BJ (cell line): ENCODE measurements at regions of chr9 and their contacts with region 1.

Region 1: DNA sequence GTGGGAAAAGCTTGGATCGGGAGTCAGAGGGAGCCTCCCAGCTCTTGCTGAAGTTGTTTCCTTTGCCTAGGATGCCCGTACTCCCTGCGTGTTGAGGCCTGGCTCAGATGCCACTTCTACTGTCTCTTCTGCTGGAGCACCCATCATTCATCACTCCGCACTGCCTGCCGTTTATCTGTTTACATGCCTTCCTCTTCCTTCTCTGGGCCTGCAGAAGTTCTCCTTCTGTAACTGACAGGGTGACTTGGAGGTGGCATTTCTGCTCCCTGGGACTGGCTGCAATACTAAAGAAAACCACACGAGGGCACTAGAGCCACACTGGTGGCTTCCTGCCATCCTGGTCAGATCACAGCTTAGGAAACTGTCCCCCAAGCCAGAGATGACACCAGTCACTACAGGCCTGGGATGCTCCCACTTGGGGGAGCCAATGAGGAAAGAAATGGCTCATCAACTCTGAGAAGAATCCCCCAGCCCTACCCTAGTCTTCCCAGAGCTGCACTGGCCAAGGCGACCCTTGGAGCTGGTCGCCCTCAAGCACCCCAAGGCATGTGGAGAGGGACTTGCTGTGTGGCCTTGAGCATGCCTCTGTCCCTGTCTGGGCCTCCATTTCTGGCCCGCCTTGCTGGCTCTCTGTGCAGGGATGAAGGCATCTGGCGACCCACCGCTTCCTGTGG is 9.7 kb upstream of the SLC25A51 start:
- DNase-seq: no peak
- H3K4me3 ChIP-seq: no peak overlapping the region
- H3K27me3 ChIP-seq: no peaks in the 10 kb centered on the region
- CTCF ChIP-seq: peak; percentile 97

Region 2: GRCh38 chr9:37656936-37657335 is 256.7 kb before region 1 on chr9:
- CTCF ChIA-PET with region 1: no interaction called
- POLR2A ChIA-PET with region 1: no interaction called
- DNase-seq: no peak
- H3K4me3 ChIP-seq: no peak overlapping the region
- H3K27me3 ChIP-seq: peaks cover 32% of the 10 kb centered on the region
- CTCF ChIP-seq: no peak

Region 3: DNA sequence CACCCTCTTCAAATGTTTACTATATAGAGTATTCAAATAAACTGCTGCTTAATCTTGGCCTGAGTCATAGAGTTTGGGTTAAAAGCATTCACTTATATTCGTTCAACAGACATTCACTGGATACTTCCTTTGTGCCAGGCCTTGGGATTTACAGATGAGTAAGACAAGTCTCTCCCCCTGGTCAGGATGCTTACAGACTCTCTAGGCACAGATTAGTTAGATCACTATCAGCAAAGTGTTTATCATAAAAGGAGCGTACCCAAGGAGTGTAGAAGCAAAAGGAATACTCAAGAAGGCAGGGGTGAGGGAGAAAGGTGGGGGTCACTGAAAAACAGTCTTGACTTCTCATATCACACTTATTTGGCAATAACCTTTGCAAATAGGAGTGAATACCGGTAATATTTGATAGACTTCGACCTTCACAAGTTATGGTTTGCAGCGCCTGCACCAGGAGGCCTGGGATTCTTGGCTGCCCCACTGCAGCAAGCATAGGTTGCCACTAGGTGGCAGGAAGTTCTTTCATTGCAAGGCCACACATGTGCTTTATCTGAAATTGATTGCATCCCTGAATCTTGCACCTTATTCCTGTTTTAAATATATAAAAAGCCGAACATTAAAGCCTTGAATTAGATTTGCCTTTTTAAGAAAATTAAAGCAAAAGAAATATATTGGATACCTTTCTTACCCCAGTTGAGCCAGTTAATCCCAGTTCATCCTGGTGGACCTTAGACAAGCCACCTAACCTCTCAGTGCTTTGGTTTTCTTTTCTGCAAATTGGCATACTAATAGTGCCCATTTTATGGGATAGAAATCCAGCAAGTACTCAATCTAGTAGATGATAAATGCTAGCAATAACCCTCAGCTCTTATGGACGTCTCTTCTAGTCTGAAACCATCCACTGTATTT is 166.5 kb before region 1 on chr9:
- CTCF ChIA-PET with region 1: no interaction called
- POLR2A ChIA-PET with region 1: no interaction called
- DNase-seq: peak; percentile 10
- H3K4me3 ChIP-seq: no peak overlapping the region
- H3K27me3 ChIP-seq: peaks cover 2% of the 10 kb centered on the region; the same call in 1 of the 2 replicates
- CTCF ChIP-seq: peak; percentile 97

Region 4: GRCh38 chr9:37800631-37801286 is 112.9 kb before region 1 on chr9 and contains the start of gene DCAF10:
- CTCF ChIA-PET with region 1: no interaction called
- POLR2A ChIA-PET with region 1: interaction called, 13 read pairs
- DNase-seq: no peak
- H3K4me3 ChIP-seq: peak within 1 kb of the TSS; percentile 55
- H3K27me3 ChIP-seq: no peaks in the 10 kb centered on the region
- CTCF ChIP-seq: no peak
- polyA plus RNA-seq, gene DCAF10: 22.0 and 25.2 TPM in 2 replicates

Region 5: DNA sequence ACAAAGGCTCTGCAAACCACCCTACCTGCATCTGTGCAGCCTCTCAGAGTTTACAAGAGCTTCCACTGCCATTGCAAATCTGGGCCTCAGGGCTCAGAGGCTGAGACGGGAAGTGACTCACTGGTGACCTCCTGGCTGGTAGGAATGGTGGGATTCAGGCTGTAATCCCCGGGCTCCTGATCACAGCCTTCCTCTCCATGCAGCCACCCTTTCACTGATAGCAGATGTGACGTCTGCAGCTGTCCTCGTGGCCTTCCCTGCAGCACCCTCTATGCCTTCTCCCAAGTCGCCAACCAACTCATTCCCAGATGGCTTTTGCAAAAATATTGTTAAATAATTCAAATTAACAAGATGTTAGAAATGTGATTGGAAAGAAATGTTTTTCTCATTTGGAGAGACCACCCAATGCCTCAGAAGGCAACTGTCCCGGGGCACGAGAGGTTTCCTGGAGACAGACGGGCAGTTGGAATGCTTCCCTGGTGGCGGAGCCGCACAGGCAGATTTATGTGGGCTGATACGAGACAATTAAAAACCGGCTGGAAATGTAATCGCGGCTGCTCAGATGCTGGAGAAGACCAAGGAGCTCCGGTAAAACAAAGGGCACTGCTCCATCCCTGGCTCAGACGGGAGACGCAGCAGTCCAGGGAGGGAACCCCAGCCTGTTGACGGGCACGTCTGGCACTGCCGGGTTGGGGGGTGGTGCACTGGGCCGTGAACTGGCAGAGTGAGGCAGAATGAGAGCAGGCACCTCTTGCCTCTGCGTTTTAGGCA is 24.7 kb after region 1 on chr9:
- CTCF ChIA-PET with region 1: interaction called, 14 read pairs
- POLR2A ChIA-PET with region 1: no interaction called
- DNase-seq: peak; percentile 47
- H3K4me3 ChIP-seq: no peak overlapping the region
- H3K27me3 ChIP-seq: no peaks in the 10 kb centered on the region
- CTCF ChIP-seq: no peak

Region 6: GRCh38 chr9:38017149-38017884 is 103.7 kb after region 1 on chr9:
- CTCF ChIA-PET with region 1: interaction called, 30 read pairs
- POLR2A ChIA-PET with region 1: no interaction called
- DNase-seq: no peak
- H3K4me3 ChIP-seq: no peak overlapping the region
- H3K27me3 ChIP-seq: no peaks in the 10 kb centered on the region
- CTCF ChIP-seq: peak; percentile 23; the same call in 1 of the 2 replicates

Region 7: DNA sequence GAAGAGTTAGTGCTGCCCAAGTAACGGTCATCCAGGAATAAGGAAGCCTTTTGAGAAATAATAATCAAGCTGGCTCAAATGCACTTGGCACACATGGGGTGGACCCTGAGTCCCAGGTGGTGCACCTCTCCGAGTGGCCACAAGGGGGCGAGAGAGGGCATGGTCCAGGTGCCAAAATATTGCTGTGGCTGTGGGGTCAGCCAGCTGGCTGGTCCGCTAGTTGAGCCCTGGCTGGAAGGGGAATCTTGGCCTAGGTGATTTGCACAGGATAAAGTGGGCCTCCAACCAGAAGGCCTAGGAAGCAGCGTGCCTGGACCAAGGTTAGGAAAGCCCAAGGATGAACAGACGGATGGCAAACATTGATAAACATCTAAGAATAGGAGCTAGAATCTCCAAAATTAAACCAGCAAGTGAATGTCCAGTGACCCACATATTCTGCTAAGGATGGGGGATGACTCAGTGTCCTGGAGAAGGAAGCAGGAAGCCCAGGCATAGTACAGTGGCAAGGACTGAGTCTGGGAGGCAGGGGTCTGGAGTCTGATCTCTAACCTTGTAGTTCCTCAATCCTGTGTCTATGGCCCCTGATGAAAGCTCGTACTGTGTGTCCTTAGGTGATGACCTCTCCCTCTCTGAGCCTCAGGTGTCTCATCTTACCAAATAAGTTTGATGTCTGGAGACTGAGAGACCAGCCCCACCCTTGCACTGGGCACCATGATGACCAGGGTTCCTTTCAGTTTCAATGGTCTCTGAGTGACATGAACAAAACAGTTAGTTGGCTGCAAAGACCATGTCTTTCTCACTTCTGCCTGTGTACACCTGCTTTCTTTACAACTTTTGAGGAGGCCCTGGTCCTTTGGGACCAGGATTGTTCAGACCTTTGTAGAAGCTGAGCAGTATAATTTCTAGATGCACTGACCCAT is 174.6 kb after region 1 on chr9:
- CTCF ChIA-PET with region 1: interaction called, 42 read pairs
- POLR2A ChIA-PET with region 1: no interaction called
- DNase-seq: no peak
- H3K4me3 ChIP-seq: no peak overlapping the region
- H3K27me3 ChIP-seq: no peaks in the 10 kb centered on the region; the same call in 1 of the 2 replicates
- CTCF ChIP-seq: peak; percentile 97

Region 8: GRCh38 chr9:38263532-38263931 is 349.9 kb after region 1 on chr9:
- CTCF ChIA-PET with region 1: interaction called, 21 read pairs
- POLR2A ChIA-PET with region 1: no interaction called
- DNase-seq: no peak
- H3K4me3 ChIP-seq: no peak overlapping the region
- H3K27me3 ChIP-seq: peaks cover 2% of the 10 kb centered on the region; the same call in 1 of the 2 replicates
- CTCF ChIP-seq: peak; percentile 34; the same call in 1 of the 2 replicates